Naive thymus-derived CD4-positive, alpha-beta T cell (primary cell): ENCODE measurements at regions of chr11 and their contacts with region 1.

Region 1: DNA sequence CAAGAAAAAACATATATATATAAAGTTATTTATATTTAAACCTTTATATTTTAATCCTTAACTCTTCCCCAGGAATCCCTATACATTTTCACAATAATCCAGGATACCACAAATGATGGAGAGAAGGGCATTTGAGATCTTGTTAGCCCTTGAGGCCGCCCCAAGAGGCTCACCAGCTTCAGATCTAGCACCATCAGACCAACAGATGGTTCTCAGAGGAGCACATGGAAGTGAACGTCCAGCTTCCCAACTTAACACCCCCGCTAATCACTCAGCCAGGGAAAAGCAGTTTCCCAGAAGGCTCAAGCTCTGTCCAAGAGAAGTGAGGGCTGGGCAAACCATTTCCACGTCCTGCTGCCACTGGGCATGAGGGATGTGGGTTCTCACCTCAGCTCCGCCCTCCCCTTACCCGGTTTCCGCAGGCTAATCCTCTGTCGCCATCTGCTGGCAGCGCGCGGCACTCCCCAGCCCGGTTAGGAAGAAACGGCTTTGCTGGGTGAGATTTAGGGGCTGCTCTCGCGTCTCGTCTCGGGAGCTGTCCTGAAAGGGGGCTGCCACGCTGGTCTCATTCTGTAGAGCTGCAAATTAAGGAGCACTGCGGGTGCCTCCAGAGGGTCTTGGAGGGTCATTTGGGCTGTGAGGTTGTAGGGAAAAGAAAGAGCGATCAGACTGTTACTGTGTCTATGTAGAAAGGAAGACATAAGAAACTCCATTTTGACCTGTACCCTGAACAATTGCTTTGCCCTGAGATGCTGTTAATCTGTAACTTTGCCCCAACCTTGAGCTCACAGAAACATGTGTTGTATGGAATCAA is 6.8 kb upstream of the FAM111A start:
- DNase-seq: peak; percentile 72 to 92 (median 84)
- ATAC-seq: peak; percentile 100
- H3K4me3 ChIP-seq: no peak overlapping the region
- H3K4me3 Mint-ChIP-seq: peak overlapping the region in 9 of 10 donors; percentile 41 to 85 (median 66)
- H3K27ac ChIP-seq: no peak overlapping the region
- H3K27ac Mint-ChIP-seq: peak overlapping the region in 5 of 9 donors; percentile 0 to 87 (median 68)
- H3K4me1 ChIP-seq: peaks cover 4 to 5% of the 10 kb centered on the region in 2 donors
- H3K4me1 Mint-ChIP-seq: peaks cover 3 to 33% (median 10%) of the 10 kb centered on the region in 7 donors
- H3K27me3 ChIP-seq: no peaks in the 10 kb centered on the region
- H3K27me3 Mint-ChIP-seq: no peaks in the 10 kb centered on the region

Region 2: DNA sequence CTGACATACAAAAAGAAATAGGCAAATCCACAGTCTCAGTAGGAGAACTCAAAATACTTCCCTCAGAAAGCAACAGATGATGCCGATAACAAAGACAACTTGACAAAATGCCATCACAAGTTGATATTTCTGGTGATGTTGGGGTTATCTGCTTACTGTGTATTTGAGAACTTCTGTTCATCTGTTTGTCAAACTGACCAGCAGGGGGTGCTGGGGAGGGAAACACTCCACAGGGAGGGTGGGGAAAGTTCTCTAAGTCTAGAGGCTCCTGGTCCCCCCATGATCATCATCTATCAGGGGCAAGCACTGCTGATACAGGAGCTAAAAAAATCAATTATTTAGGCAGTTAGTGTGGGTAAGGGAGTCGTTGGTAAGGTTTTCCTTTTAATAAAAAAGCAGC is 177.4 kb before region 1 on chr11:
- CTCF ChIA-PET with region 1: no interaction called
- POLR2A ChIA-PET with region 1: no interaction called
- intact Hi-C with region 1: loop called in 1 of 2 experiments (anchors 1 kb)
- DNase-seq: peak in 6 of 9 donors; percentile 4 to 18 (median 8)
- ATAC-seq: peak; percentile 60
- H3K4me3 ChIP-seq: no peak overlapping the region
- H3K4me3 Mint-ChIP-seq: no peak overlapping the region
- H3K27ac ChIP-seq: no peak overlapping the region
- H3K27ac Mint-ChIP-seq: no peak overlapping the region
- H3K4me1 ChIP-seq: no peaks in the 10 kb centered on the region
- H3K4me1 Mint-ChIP-seq: peaks cover 0 to 2% (median 0%) of the 10 kb centered on the region in 7 donors
- H3K27me3 ChIP-seq: no peaks in the 10 kb centered on the region
- H3K27me3 Mint-ChIP-seq: peaks cover 0 to 21% (median 8%) of the 10 kb centered on the region in 5 donors

Region 3: DNA sequence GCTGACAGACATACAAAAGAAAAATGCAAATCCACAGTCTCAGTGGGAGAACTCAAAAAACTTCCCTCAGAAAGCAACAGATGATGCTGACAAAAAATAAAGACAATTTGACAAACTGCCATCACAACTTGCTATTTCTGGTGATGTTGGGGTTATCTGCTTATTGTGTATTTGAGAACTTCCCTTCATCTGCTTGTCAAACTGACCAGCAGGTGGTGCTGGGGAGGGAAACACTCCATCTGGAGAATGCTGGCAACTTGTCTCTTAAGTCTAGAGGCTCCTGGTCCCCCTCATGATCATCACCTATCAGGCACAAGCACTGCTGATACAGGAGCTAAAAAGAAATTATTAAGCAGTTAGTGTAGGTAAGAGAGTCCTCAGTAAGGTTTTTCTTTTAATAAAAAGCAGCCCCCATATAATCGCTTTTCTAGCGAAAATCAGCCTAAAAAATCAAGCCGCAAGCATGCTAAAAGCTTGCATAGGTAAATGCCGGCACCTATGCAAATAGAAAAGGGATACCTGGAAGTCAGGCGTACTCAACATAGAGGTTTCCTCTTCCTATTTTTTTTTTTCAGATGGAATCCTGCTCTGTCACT is 38.6 kb before region 1 on chr11:
- CTCF ChIA-PET with region 1: interaction called, 12 read pairs
- POLR2A ChIA-PET with region 1: no interaction called
- intact Hi-C with region 1: loop called (anchors 1 kb)
- DNase-seq: peak; percentile 31 to 66 (median 58)
- ATAC-seq: peak; percentile 84
- H3K4me3 ChIP-seq: no peak overlapping the region
- H3K4me3 Mint-ChIP-seq: no peak overlapping the region
- H3K27ac ChIP-seq: no peak overlapping the region
- H3K27ac Mint-ChIP-seq: no peak overlapping the region
- H3K4me1 ChIP-seq: no peaks in the 10 kb centered on the region
- H3K4me1 Mint-ChIP-seq: peaks cover 0 to 11% (median 6%) of the 10 kb centered on the region in 7 donors
- H3K27me3 ChIP-seq: no peaks in the 10 kb centered on the region
- H3K27me3 Mint-ChIP-seq: peaks cover 26 to 44% (median 34%) of the 10 kb centered on the region in 5 donors

Region 4: GRCh38 chr11:59106363-59107336 is 29.2 kb before region 1 on chr11 and contains the start of gene FAM111B:
- CTCF ChIA-PET with region 1: interaction called, 5 read pairs
- POLR2A ChIA-PET with region 1: no interaction called
- intact Hi-C with region 1: loop called in 1 of 2 experiments (anchors 1 kb)
- DNase-seq: peak; percentile 10 to 76 (median 39)
- ATAC-seq: peak; percentile 85
- H3K4me3 ChIP-seq: peak within 1 kb of the TSS; percentile 65
- H3K4me3 Mint-ChIP-seq: peak within 1 kb of the TSS; percentile 71 to 92 (median 83)
- H3K27ac ChIP-seq: no peak within 1 kb of the TSS
- H3K27ac Mint-ChIP-seq: peak within 1 kb of the TSS in 3 of 9 donors; percentile 13 to 83 (median 49)
- H3K4me1 ChIP-seq: peaks cover 12% of the 10 kb centered on the region in 2 donors
- H3K4me1 Mint-ChIP-seq: peaks cover 13 to 79% (median 26%) of the 10 kb centered on the region in 7 donors
- H3K27me3 ChIP-seq: peaks cover 0 to 5% of the 10 kb centered on the region in 2 donors
- H3K27me3 Mint-ChIP-seq: peaks cover 0 to 38% (median 34%) of the 10 kb centered on the region in 5 donors
- total RNA-seq, gene FAM111B: 0.11 to 79.8 (median 0.42) TPM in 4 of 5 experiments, not detected in the other

Region 5: DNA sequence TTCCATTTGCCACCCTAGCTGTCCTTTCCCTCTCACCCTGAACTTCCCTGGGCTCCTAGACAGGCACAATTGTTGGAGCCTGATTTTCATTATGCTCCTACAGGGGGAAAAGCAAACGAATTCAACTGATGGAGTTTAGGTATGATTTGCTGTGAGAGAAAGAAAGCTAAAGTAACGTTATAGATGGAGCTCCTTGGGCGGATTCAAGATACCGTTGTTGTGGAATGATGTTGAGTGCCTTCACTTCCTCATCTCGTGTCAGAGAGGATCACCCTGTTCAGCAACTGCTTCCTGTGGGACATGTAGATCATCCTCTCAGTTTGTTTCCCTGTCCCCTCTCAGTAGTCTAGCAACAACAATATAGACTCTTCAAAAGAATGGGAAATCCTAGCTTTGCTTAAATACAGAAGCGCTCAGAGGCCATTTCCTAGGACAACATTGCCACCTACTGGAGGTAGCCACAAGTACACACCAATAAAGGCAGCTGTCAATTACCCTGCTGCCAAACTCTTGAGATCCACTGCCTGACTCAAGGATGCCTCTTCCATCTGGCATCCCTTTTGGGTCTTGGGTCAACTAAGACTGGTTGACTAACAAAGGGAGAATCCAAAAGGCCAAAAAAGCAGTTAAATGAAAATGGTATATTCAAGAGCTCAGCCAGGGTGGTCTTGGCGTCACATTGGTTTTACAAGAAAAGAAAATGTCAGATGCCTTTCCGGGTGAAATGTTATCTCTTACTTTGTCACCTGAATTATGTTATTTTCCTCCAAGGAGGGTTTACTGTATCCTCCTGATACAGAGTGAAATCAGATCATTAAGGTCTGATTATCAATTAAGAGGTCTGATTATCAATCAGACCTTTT is 22.6 kb after region 1 on chr11:
- CTCF ChIA-PET with region 1: interaction called, 25 read pairs
- POLR2A ChIA-PET with region 1: no interaction called
- intact Hi-C with region 1: loop called in 1 of 2 experiments (anchors 1 kb)
- DNase-seq: peak in 8 of 9 donors; percentile 53 to 75 (median 70)
- ATAC-seq: peak; percentile 97
- H3K4me3 ChIP-seq: no peak overlapping the region
- H3K4me3 Mint-ChIP-seq: peak overlapping the region in 1 of 10 donors; percentile 18
- H3K27ac ChIP-seq: no peak overlapping the region
- H3K27ac Mint-ChIP-seq: peak overlapping the region in 7 of 9 donors; percentile 8 to 65 (median 50)
- H3K4me1 ChIP-seq: no peaks in the 10 kb centered on the region
- H3K4me1 Mint-ChIP-seq: peaks cover 4 to 16% (median 5%) of the 10 kb centered on the region in 7 donors
- H3K27me3 ChIP-seq: no peaks in the 10 kb centered on the region
- H3K27me3 Mint-ChIP-seq: peaks cover 9 to 14% (median 9%) of the 10 kb centered on the region in 5 donors

Region 6: DNA sequence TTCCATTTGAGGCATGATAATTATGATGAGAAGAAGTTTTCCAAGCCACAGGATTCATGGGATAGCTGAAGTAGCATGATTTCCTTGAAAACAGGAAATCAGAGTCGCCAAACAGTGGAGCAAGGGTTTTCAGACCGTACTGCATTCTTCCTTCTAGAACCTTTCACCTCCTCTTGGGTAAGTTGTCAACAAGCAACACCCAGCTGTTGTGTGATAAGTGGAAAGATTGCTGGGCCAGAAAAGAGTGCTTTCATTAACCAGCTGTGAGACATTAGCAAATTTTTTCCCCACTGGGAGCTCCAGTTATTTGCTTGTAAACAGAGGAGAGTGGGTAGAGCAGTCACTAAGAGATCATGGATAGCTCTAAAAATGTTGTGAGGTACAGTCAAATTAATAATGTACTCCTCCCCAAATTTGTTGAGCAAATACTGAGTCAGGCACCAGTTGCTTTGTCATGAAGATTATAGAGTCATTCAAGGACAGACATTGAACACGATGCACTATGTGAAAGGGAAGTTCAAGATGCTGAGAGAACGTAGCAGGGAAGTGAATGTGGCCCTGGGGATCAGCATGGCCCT is 88.6 kb after region 1 on chr11:
- CTCF ChIA-PET with region 1: no interaction called
- POLR2A ChIA-PET with region 1: no interaction called
- intact Hi-C with region 1: no loop called
- DNase-seq: no peak
- ATAC-seq: peak; percentile 73
- H3K4me3 ChIP-seq: no peak overlapping the region
- H3K4me3 Mint-ChIP-seq: no peak overlapping the region
- H3K27ac ChIP-seq: no peak overlapping the region
- H3K27ac Mint-ChIP-seq: no peak overlapping the region
- H3K4me1 ChIP-seq: no peaks in the 10 kb centered on the region
- H3K4me1 Mint-ChIP-seq: peaks cover 0 to 16% (median 0%) of the 10 kb centered on the region in 7 donors
- H3K27me3 ChIP-seq: no peaks in the 10 kb centered on the region
- H3K27me3 Mint-ChIP-seq: peaks cover 0 to 7% (median 0%) of the 10 kb centered on the region in 5 donors